ENCODE measurements at regions of chr2 and their contacts with region 1.

Region 1: GRCh38 chr2:74876081-74876886 is 42.4 kb downstream of the HK2 start:
- DNase-seq: peak; percentile 57 to 65
- ATAC-seq: peak; percentile 82 to 94
- H3K4me3 ChIP-seq: no peak overlapping the region
- H3K27ac ChIP-seq: 0 out of 6 replicates have a peak overlapping the region, but pooled peaks of 1 of the 2 experiments have one; percentile 21
- H3K4me1 ChIP-seq: no peaks in the 10 kb centered on the region
- CTCF ChIP-seq: peak; percentile 89
- EP300 ChIP-seq: no peak
- POLR2A ChIP-seq: no peak
- RAD21 ChIP-seq: peak; percentile 89 to 94

Region 2: DNA sequence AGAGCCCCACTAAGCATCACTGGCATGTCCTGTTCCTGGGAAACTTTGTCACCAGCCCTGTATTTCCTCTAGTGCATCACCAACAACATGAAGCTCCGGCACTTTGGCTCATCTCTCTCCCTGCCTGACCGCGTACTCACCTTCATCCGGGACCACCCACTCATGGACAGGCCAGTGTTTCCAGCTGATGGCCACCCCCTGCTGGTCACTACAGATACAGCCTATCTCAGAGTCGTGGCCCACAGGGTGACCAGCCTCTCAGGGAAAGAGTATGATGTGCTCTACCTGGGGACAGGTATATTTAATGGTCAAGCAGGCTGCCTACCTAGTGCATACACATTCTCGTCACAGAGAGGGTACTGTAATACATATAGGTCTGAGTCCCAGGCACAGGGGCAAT is 201.2 kb before region 1 on chr2:
- CTCF ChIA-PET with region 1: interaction called, 24 read pairs
- POLR2A ChIA-PET with region 1: no interaction called
- DNase-seq: no peak
- ATAC-seq: peak; percentile 26 to 72; a peak in 3 of 6 replicates
- H3K4me3 ChIP-seq: no peak overlapping the region
- H3K27ac ChIP-seq: no peak overlapping the region
- H3K4me1 ChIP-seq: no peaks in the 10 kb centered on the region
- CTCF ChIP-seq: no peak
- EP300 ChIP-seq: no peak
- POLR2A ChIP-seq: no peak
- RAD21 ChIP-seq: 0 out of 5 replicates have a peak, but pooled peaks of 1 of the 2 experiments have one; percentile 13

Region 3: DNA sequence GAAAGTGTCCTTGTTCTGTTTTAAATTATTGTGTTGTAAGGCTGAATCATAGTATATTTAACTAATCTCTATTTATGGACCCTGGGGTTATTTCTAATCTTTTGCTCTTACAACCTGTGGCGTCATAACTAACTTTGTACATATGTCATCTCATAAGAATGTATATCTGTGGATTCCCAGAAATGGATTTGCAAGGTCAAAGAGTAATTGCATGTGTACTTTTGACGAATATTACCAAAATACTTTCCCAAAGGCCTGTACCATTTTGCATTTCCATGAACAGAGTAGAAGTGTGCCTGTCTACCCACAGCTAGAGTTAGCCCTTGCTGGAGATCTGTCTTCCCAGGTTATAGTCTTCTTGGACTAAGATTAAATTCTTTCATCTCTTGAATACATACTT is 179.5 kb before region 1 on chr2:
- CTCF ChIA-PET with region 1: interaction called, 132 read pairs
- POLR2A ChIA-PET with region 1: no interaction called
- DNase-seq: no peak
- ATAC-seq: no peak
- H3K4me3 ChIP-seq: no peak overlapping the region
- H3K27ac ChIP-seq: no peak overlapping the region
- H3K4me1 ChIP-seq: peaks cover 3% of the 10 kb centered on the region; the same call in 1 of the 3 replicates
- CTCF ChIP-seq: no peak
- EP300 ChIP-seq: no peak
- POLR2A ChIP-seq: no peak
- RAD21 ChIP-seq: no peak

Region 4: GRCh38 chr2:74740389-74741075 is 135.8 kb before region 1 on chr2:
- CTCF ChIA-PET with region 1: interaction called, 36 read pairs
- POLR2A ChIA-PET with region 1: interaction called, 3 read pairs
- DNase-seq: peak; percentile 88 to 95
- ATAC-seq: peak; percentile 95 to 98
- H3K4me3 ChIP-seq: no peak overlapping the region
- H3K27ac ChIP-seq: peak overlapping the region; percentile 34 to 75
- H3K4me1 ChIP-seq: peaks cover 28% of the 10 kb centered on the region
- CTCF ChIP-seq: no peak
- EP300 ChIP-seq: peak; percentile 5 to 45; a peak in 2 of 5 replicates
- POLR2A ChIP-seq: no peak
- RAD21 ChIP-seq: peak; percentile 22 to 41; a peak in 4 of 5 replicates

Region 5: DNA sequence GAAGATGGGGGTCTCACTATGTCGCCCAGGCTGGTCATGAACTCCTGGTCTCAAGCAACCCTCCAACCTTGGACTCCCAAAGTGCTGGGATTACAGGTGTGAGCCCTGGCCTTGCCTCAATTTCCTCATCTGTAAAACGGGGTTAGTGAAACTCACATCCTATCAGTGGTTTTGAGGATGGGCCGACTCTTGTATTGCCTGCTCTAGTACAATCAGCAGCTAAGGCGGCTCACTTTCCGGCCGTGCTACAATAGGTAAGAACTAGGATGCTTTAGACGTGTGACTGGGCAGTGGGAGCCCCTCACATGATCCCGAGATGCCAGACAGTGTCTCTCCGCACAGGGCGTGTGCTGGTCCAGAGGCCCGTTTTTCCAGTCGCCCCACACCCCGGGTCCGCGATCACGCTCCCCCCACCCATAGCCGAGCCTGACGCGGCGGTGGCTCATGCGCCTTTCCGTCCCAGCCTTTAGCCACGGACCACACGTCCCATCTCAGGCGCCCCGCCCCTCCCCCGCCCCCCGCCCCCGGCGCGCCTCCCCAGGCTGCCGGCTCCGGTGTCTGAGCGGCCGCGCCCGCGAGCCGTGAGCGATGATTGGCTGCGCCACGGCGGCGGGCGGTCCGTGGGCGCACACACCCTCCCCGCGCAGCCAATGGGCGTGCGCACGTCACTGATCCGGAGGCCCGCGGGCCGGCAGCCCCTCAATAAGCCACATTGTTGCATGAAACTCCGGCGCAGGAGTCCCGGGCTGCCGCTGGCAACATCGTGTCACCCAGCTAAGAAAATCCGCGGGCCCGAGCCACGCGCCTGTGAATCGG is 42.7 kb before region 1 on chr2 and contains the start of gene HK2:
- CTCF ChIA-PET with region 1: interaction called, 69 read pairs
- POLR2A ChIA-PET with region 1: no interaction called
- DNase-seq: peak; percentile 62 to 78
- ATAC-seq: peak; percentile 80 to 88
- H3K4me3 ChIP-seq: peak within 1 kb of the TSS; percentile 47
- H3K27ac ChIP-seq: peak within 1 kb of the TSS; percentile 15 to 79; a peak in 5 of 6 replicates
- H3K4me1 ChIP-seq: peaks cover 7% of the 10 kb centered on the region; the same call in 1 of the 3 replicates
- CTCF ChIP-seq: no peak
- EP300 ChIP-seq: no peak
- POLR2A ChIP-seq: no peak
- RAD21 ChIP-seq: no peak
- polyA plus RNA-seq, gene HK2: 1.1 and 1.2 TPM in 2 replicates

Region 6: GRCh38 chr2:74864846-74865722 is 11.2 kb before region 1 on chr2:
- CTCF ChIA-PET with region 1: interaction called, 57 read pairs
- POLR2A ChIA-PET with region 1: no interaction called
- DNase-seq: no peak
- ATAC-seq: no peak
- H3K4me3 ChIP-seq: no peak overlapping the region
- H3K27ac ChIP-seq: peak overlapping the region in 1 of 2 experiments; percentile 7; a peak in 1 of 6 replicates
- H3K4me1 ChIP-seq: 0 out of 3 replicates have a peak, but pooled peaks cover 4% of the 10 kb centered on the region
- CTCF ChIP-seq: no peak
- EP300 ChIP-seq: no peak
- POLR2A ChIP-seq: no peak
- RAD21 ChIP-seq: no peak

Region 7: DNA sequence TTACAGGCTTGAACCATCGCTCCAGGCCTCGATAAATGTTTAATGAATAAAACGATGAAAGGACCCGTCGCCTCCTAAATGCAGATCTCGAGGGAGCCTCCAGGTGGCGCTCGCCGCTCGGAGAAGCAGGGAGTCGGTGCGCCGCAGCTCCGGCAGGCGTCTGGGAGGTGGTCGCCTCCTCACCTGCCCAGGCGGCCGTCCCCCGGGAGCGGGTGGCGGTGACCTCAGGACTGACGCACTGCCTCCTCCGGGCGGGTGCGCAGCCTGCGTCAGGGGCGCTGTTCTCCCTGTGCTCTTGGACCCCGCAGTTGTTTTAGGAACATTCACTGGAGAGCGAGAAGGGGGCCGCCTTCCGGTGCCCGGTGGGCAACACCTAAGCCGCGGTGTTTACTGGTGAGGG is 43.5 kb after region 1 on chr2:
- CTCF ChIA-PET with region 1: interaction called, 11 read pairs
- POLR2A ChIA-PET with region 1: no interaction called
- DNase-seq: peak; percentile 69 to 82
- ATAC-seq: peak; percentile 73 to 88
- H3K4me3 ChIP-seq: peak overlapping the region; percentile 53
- H3K27ac ChIP-seq: peak overlapping the region; percentile 12 to 66; a peak in 3 of 6 replicates
- H3K4me1 ChIP-seq: peaks cover 6% of the 10 kb centered on the region
- CTCF ChIP-seq: peak; percentile 98
- EP300 ChIP-seq: no peak
- POLR2A ChIP-seq: no peak
- RAD21 ChIP-seq: peak; percentile 96 to 99

Region 8: DNA sequence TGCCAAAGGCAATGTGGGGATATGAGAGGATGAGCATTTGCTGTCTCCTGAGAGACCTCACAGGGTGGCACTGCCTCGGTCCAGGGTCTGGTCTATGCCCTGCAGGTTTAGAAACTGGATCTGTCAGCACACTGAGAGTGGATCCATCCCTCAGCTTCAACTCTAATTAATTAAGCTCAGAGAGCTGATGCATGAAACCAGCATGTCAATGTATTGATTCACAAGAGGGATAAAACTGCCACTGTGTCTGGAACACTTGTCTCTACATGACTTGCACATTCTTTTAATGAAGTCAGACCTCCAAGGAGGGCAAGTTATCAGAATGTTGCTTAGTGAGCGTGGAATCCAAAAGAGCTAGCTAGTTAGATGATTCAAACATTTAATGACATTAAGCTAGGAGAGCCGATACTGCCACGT is 59.7 kb after region 1 on chr2:
- CTCF ChIA-PET with region 1: no interaction called
- POLR2A ChIA-PET with region 1: no interaction called
- DNase-seq: no peak
- ATAC-seq: peak in 1 of 2 experiments; percentile 51; a peak in 3 of 6 replicates
- H3K4me3 ChIP-seq: no peak overlapping the region
- H3K27ac ChIP-seq: 0 out of 6 replicates have a peak overlapping the region, but pooled peaks of 1 of the 2 experiments have one; percentile 8
- H3K4me1 ChIP-seq: peaks cover 33% of the 10 kb centered on the region
- CTCF ChIP-seq: no peak
- EP300 ChIP-seq: no peak
- POLR2A ChIP-seq: no peak
- RAD21 ChIP-seq: no peak

Region 9: GRCh38 chr2:74982577-74982976 is 106.3 kb after region 1 on chr2:
- CTCF ChIA-PET with region 1: no interaction called
- POLR2A ChIA-PET with region 1: no interaction called
- DNase-seq: peak in 1 of 2 experiments; percentile 19
- ATAC-seq: peak in 1 of 2 experiments; percentile 58; a peak in 2 of 6 replicates
- H3K4me3 ChIP-seq: no peak overlapping the region
- H3K27ac ChIP-seq: no peak overlapping the region
- H3K4me1 ChIP-seq: no peaks in the 10 kb centered on the region
- CTCF ChIP-seq: peak; percentile 42
- EP300 ChIP-seq: no peak
- POLR2A ChIP-seq: no peak
- RAD21 ChIP-seq: peak; percentile 51 to 57

Region 10: GRCh38 chr2:75025623-75026380 is 149.5 kb after region 1 on chr2:
- CTCF ChIA-PET with region 1: no interaction called
- POLR2A ChIA-PET with region 1: no interaction called
- DNase-seq: no peak
- ATAC-seq: peak; percentile 27 to 48; a peak in 2 of 6 replicates
- H3K4me3 ChIP-seq: no peak overlapping the region
- H3K27ac ChIP-seq: no peak overlapping the region; a peak in 1 of 6 replicates
- H3K4me1 ChIP-seq: peaks cover 21% of the 10 kb centered on the region; the same call in 1 of the 3 replicates
- CTCF ChIP-seq: no peak
- EP300 ChIP-seq: no peak
- POLR2A ChIP-seq: no peak
- RAD21 ChIP-seq: no peak